Left cardiac atrium (tissue), 4 donors: ENCODE measurements at regions of chr5 and their contacts with region 1.

Region 1: GRCh38 chr5:141524604-141525597 is 36.0 kb downstream of the PCDHGC5 start:
- DNase-seq: peak; percentile 85
- ATAC-seq: peak; percentile 61 to 85

Region 2: GRCh38 chr5:141420855-141421496 is 103.9 kb before region 1 on chr5 and contains the start of gene PCDHGA11:
- intact Hi-C with region 1: loop called in 1 of 2 experiments (anchors 10 kb)
- DNase-seq: no peak
- ATAC-seq: peak in 1 of 2 donors; percentile 52
- total RNA-seq, gene PCDHGA11: 3.2 to 3.5 TPM

Region 3: GRCh38 chr5:141800617-141801016 is 275.7 kb after region 1 on chr5:
- intact Hi-C with region 1: no loop called
- DNase-seq: no peak
- ATAC-seq: no peak